ENCODE measurements at regions of chr3 and their contacts with region 1.

Region 1: DNA sequence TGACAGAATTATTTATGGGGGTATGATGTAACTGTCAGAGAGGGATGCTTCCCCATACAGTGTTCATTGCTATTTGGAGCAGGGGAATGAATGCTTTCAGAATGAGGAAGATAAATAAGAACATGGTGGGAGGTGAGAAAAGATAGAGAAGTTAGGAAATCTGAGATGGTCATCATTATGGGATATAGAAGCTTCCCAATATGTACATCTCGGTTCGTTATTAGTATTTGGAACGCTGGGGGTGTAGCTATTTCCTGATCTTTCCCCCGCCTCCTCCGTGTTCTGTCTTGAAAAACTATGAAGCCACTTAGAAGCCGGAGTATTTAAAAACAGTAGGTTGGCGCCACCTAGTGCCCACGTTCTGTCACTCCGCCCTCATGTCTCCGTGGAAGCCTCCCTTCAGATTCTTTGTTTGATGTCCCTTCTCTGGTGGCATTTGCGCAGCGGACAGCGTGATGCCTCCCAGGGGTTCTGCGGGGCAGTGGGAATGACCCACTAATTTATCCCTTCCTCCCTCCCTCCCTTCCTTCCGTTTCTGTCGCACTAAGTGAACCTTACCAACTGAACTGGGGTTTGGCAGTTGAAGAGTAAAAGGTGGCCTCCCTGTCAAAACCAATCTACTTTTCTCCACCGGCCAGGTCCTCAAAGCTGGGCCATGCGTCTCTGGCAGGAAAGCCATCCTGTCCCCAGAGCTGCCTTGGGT is 184.5 kb downstream of the FEZF2 start:
- DNase-seq: peak; percentile 76
- H3K4me3 ChIP-seq: no peak overlapping the region
- H3K27ac ChIP-seq: no peak overlapping the region
- H3K4me1 ChIP-seq: no peaks in the 10 kb centered on the region
- H3K27me3 ChIP-seq: no peaks in the 10 kb centered on the region
- CTCF ChIP-seq: peak; percentile 79 to 84 (median 81)
- EP300 ChIP-seq: no peak
- POLR2A ChIP-seq: no peak

Region 2: DNA sequence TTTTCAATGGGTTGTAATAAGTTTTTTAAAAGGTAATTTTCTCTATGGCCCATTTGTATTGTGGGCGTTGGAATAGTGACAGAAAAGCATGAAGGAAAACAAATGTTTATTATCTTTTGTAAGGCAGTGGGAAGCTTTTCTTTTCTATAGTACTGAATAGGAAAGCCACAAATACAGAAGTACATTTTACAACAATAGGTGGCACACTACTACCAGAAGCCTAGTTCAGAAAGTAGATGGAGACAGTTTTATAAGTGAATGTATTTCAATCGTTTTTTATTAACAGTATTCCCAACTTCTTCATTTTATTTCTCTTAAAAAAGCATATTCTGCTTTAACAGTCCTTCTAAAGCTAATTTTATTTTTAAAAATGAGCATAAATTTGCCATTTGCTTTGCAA is 330.8 kb before region 1 on chr3:
- in situ Hi-C with region 1: loop called (anchors 10 kb)
- intact Hi-C with region 1: no loop called
- DNase-seq: no peak
- H3K4me3 ChIP-seq: no peak overlapping the region
- H3K27ac ChIP-seq: no peak overlapping the region
- H3K4me1 ChIP-seq: peaks cover 0 to 15% (median 7%) of the 10 kb centered on the region in 4 donors
- H3K27me3 ChIP-seq: no peaks in the 10 kb centered on the region
- CTCF ChIP-seq: peak in 4 of 5 experiments; percentile 30 to 45 (median 36)
- EP300 ChIP-seq: no peak
- POLR2A ChIP-seq: no peak

Region 3: GRCh38 chr3:61864886-61865285 is 323.9 kb before region 1 on chr3:
- in situ Hi-C with region 1: loop called in 3 of 4 experiments (anchors 10 kb)
- intact Hi-C with region 1: loop called (anchors 5 kb)
- DNase-seq: no peak
- H3K4me3 ChIP-seq: no peak overlapping the region
- H3K27ac ChIP-seq: no peak overlapping the region
- H3K4me1 ChIP-seq: peaks cover 0 to 10% (median 5%) of the 10 kb centered on the region in 4 donors
- H3K27me3 ChIP-seq: no peaks in the 10 kb centered on the region
- CTCF ChIP-seq: no peak
- EP300 ChIP-seq: no peak
- POLR2A ChIP-seq: no peak

Region 4: DNA sequence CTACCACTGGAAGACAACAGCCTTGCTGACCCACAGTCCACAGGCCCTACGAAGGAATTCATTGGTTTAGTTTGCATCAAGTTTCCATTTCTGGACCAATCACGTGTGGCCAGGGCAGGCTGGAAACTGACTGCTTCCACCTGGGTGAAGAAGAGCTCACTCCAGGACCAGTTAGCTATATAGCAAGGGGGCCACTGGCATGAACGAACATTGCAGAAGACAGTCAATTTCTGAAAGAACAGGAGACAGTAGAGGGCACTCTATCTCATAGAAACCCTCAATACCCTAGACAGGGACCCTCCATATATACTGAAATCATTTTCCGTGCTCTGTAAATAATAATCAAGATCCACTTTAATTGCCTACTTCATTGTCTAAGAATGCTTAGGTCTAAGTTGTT is 470.8 kb after region 1 on chr3:
- in situ Hi-C with region 1: no loop called
- intact Hi-C with region 1: no loop called
- DNase-seq: no peak
- H3K4me3 ChIP-seq: no peak overlapping the region
- H3K27ac ChIP-seq: no peak overlapping the region
- H3K4me1 ChIP-seq: no peaks in the 10 kb centered on the region
- H3K27me3 ChIP-seq: no peaks in the 10 kb centered on the region
- CTCF ChIP-seq: no peak
- EP300 ChIP-seq: no peak
- POLR2A ChIP-seq: no peak